ENCODE measurements at regions of chr1 and their contacts with region 1.

Region 1: GRCh38 chr1:43763497-43763973 is 56.2 kb downstream of the ST3GAL3 start:
- DNase-seq: peak; percentile 84
- H3K4me3 ChIP-seq: no peak overlapping the region
- H3K27ac ChIP-seq: peak overlapping the region; percentile 46
- H3K4me1 ChIP-seq: peaks cover 48% of the 10 kb centered on the region
- H3K27me3 ChIP-seq: no peaks in the 10 kb centered on the region
- CTCF ChIP-seq: peak; percentile 87 to 93

Region 2: GRCh38 chr1:43650310-43651085 is 113.0 kb before region 1 on chr1:
- CTCF ChIA-PET with region 1: no interaction called
- dilution Hi-C with region 1: no loop called
- in situ Hi-C with region 1: loop called in 1 of 2 experiments (anchors 25 kb)
- intact Hi-C with region 1: no loop called
- DNase-seq: peak; percentile 95
- H3K4me3 ChIP-seq: peak overlapping the region; percentile 69 to 81 (median 75)
- H3K27ac ChIP-seq: peak overlapping the region; percentile 92
- H3K4me1 ChIP-seq: peaks cover 20% of the 10 kb centered on the region
- H3K27me3 ChIP-seq: no peaks in the 10 kb centered on the region
- CTCF ChIP-seq: no peak

Region 3: GRCh38 chr1:43858328-43858731 is 94.8 kb after region 1 on chr1:
- CTCF ChIA-PET with region 1: interaction called, 7 read pairs
- dilution Hi-C with region 1: loop called (anchors 5 kb)
- in situ Hi-C with region 1: no loop called
- intact Hi-C with region 1: loop called (anchors 1 kb)
- DNase-seq: peak; percentile 99
- H3K4me3 ChIP-seq: no peak overlapping the region
- H3K27ac ChIP-seq: peak overlapping the region; percentile 20
- H3K4me1 ChIP-seq: peaks cover 41% of the 10 kb centered on the region
- H3K27me3 ChIP-seq: no peaks in the 10 kb centered on the region
- CTCF ChIP-seq: no peak

Region 4: GRCh38 chr1:43974443-43975248 is 211.1 kb after region 1 on chr1 and contains the start of gene ATP6V0B:
- CTCF ChIA-PET with region 1: interaction called, 8 read pairs
- dilution Hi-C with region 1: loop called (anchors 10 kb)
- in situ Hi-C with region 1: no loop called
- intact Hi-C with region 1: no loop called
- DNase-seq: peak; percentile 93
- H3K4me3 ChIP-seq: peak within 1 kb of the TSS; percentile 86 to 94 (median 89)
- H3K27ac ChIP-seq: peak within 1 kb of the TSS; percentile 64
- H3K4me1 ChIP-seq: peaks cover 39% of the 10 kb centered on the region
- H3K27me3 ChIP-seq: no peaks in the 10 kb centered on the region
- CTCF ChIP-seq: no peak
- total RNA-seq, gene ATP6V0B: 84.4 to 127 TPM

Region 5: DNA sequence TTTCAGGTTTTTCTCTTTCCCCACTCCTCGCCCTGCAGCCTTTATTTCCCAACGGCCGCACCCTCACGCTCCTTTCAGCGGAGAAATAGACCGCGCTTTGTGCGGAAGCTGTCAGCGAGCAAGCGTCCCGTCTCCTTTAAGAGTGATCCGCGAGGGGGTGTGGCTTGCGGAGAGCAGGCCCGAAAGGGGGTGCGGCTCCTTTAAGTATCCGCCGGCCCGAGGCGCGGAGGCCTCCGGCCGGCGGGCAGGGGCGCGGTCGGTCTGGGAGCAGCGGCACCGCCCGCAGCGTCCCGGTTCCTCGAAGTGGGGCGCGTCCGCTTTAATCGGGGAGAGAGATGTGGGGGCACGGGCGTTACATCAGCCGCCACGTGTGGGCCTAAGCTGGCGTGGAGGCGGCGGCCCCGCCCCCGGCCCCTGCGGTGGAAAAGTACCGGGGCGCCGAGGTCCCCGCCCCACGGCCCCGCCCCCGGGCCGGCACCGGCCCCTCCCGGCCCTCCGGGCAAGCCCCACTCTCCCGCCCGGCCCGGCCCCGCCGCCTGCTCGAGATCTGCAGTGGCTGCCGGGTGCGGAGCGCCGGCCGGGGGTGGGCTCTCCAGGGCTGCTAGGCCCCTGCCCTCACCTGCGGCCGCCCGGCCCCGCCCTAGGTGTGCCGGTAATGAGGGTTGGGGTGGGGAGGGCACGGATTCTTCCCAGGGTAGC is 266.5 kb after region 1 on chr1:
- CTCF ChIA-PET with region 1: interaction called, 5 read pairs
- dilution Hi-C with region 1: no loop called
- in situ Hi-C with region 1: no loop called
- intact Hi-C with region 1: loop called (anchors 1 kb)
- DNase-seq: peak; percentile 88
- H3K4me3 ChIP-seq: peak overlapping the region; percentile 78 to 87 (median 83)
- H3K27ac ChIP-seq: peak overlapping the region; percentile 83
- H3K4me1 ChIP-seq: peaks cover 29% of the 10 kb centered on the region
- H3K27me3 ChIP-seq: no peaks in the 10 kb centered on the region
- CTCF ChIP-seq: no peak

Region 6: DNA sequence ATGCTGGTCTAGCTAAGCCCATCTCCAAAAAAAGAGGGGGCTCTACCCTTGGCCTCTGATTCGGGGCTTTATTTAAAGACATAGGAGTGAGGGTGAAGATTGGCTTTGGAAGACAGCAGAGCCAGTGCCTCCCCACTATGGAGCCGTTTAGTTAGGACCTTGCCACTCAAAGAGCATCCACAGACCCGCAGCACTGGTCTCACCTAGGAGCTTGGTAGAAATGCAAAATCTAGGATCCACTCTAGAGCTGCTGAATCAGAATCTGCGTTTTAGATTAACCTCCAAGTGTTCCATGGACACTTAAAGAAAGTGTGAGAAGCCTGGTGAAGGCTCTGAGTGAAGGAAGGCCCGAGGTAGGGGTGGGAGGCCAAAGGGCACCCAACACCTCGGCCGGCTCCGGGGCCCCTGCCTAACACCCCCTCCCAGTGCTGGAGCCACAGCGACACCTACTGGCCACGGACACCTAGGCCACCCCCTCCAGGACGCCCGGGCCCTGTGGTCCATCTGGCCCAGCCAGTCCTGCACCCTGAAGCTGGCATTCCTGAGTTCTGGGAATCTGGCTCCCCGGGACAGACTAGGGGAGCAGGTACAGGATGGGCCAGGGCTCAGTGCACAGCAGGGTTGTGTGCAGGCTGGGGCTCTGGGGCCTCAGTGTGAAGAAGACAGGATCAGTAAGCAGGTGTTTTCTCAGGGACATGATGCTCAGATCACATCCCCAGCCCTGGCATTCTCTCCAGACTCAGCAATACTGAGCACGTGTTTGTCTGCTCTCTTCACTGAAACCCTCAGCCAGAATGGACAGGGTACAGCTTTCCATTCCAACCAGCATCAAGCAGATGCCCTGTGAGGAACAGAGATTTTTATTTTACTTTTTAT is 831.6 kb after region 1 on chr1:
- CTCF ChIA-PET with region 1: no interaction called
- dilution Hi-C with region 1: no loop called
- in situ Hi-C with region 1: no loop called
- intact Hi-C with region 1: loop called (anchors 2 kb)
- DNase-seq: peak; percentile 33
- H3K4me3 ChIP-seq: no peak overlapping the region
- H3K27ac ChIP-seq: no peak overlapping the region
- H3K4me1 ChIP-seq: no peaks in the 10 kb centered on the region
- H3K27me3 ChIP-seq: peaks cover 8% of the 10 kb centered on the region
- CTCF ChIP-seq: peak; percentile 87 to 97

Measured in mammary epithelial cell (primary cell).